Right ventricle myocardium superior (tissue), 1 donor: ENCODE measurements at regions of chr2 and their contacts with region 1.

Region 1: DNA sequence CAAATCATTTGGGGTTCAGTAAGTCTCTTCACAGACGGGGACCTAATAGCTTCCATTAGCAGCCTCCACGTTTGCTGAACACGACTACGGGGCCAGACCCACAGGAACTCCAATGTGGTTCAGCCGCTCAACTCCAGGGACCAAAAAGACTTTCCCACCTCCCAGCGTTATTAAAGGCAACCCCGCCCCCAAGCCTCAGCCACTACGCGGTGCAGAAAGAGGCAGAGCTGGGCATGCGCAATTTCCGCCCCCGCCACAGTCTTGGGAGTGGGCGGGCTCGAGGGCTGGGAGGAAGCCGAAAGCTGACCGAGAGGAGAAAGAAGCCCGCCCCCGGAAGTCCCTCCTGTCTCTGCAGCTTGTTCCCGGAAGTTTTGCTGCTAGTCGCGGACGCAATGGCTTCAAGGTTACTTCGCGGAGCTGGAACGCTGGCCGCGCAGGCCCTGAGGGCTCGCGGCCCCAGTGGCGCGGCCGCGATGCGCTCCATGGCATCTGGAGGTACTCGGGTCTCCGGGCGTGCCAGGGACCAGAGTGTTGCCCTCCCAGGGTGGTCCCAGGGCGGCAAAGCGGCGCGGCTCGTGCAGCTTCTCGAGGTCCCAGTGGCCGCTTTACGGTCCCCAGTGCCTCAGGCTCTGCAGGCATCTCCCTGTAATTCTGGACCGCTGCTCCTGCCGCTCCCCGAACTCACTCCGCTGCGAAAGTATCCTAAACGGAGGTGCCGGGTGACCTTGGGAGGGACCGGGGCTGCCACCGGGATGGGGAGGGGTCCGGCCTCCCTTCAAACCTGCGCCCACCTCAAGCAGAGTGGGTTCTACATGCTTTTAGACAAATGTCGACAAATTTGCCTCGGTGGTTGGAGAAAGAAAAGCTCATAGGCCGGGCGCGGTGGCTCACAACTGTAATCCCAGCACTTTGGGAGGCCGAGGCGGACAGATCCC is at the start of gene COX5B:
- DNase-seq: peak; percentile 100
- ATAC-seq: peak; percentile 98
- total RNA-seq, gene COX5B: 1,337 TPM

Region 2: DNA sequence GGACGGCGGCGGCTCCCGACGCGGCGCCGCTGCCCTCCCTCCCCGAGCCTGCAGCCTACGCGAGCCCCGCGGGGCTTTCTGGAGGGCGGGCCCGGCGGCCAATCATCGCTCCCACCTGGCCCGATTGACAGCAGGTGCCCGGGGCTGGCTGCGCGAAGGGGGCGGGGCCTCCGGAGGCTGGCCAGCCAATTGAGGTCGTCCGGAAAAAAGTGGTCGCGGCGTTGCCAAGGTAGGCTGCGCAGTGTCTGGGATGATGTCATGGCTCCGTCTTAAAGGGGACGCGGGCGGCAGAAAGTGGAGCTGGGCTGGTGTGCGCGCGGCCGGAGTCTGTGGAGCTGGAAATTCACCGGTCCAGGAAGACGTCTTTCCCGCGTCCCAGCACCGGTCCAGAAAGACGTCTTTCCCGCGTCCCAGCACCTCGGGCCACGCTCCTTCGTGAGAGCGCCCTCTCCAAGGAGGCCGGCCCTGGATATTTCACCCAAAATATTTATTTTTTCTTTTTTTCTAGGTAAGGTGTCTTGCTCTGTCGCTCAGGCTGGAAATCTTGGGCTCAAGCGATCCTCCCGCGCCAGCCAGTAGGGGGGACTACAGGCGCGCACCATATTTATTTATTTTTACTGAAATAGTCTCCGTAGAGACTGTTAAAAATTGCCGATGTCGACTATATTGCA is 18.1 kb after region 1 on chr2 and contains the start of gene ACTR1B:
- intact Hi-C with region 1: loop called (anchors 2 kb)
- DNase-seq: peak; percentile 98
- ATAC-seq: peak; percentile 96
- total RNA-seq, gene ACTR1B: 54.5 TPM

Region 3: DNA sequence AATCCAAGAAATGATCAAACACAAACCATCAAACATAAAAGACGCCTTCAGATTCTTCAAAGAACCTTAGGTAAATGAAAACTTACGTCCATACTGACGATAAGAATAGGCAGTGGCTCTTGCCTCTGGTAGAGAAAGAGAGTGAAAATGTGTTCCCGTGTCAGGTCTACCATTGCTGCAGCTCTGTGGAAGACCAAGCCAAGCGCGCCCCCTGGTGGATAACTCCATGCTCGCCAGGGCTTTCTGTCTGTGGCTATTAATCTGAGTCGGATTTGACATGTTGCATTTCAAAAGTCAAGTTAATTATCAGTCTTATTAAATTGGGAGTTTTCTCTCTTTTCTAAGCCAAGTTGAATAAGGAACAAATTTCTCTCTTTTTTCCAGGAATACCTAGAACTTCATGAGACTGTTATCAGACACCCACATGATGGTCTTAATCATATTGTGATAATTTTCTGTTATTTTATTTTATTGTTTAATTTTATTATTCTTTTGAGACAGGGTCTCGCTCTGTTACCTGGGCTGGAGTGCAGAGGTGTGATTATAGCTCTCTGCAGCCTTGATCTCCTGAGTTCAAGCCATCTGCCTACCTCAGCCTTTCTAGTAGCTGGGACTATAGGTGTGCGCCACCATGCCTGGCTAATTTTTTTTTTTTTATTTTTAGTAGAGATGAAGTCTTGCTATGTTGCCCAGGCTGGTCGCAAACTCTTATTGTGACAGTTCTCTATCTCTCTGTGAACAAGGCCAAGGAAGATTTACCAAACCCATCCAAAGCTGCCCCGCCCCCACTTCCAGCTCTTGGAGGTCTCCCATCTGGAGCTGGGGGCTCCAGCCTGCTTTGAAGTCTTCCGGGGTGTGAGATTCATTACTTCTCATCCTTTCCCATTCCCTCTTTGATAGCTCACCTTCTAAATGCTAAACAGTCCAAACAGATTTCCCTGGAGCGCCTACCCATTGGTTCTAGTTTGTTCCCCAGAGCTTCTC is 51.6 kb after region 1 on chr2:
- intact Hi-C with region 1: loop called (anchors 5 kb)
- DNase-seq: peak; percentile 95
- ATAC-seq: peak; percentile 97

Region 4: DNA sequence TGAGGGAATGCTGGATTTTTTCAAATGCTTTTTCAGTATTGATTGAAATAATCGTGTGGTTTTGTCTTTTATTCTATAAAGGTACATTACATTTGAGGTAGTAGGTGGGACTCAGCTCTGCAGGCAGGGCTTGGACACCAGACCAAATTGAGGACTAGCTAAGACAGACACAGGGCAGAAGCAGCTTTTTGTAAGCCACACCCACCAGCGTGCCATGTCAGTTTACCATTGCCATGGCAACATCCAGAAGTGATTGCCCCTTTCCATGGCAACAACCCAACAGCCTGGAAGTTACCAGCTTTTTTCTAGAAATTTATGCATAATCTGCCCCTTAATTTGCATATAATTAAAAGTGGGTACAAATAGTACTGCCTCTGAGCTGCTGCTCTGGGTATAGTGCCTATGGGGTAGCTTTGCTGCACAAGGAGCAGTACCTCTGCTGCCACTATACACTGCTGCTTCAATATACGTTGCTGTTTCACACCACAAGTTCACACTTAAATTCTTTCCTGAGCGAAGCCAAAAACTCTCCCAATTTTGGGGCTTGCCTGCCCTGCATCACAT is 417.4 kb after region 1 on chr2:
- intact Hi-C with region 1: no loop called
- DNase-seq: no peak
- ATAC-seq: no peak